ENCODE measurements at regions of chr6 and their contacts with region 1.

Region 1: GRCh38 chr6:53090576-53090975 is 25.4 kb downstream of the FBXO9 start:
- DNase-seq: no peak
- ATAC-seq: no peak
- H3K4me3 ChIP-seq: no peak overlapping the region
- H3K4me3 Mint-ChIP-seq: no peak overlapping the region
- H3K27ac ChIP-seq: no peak overlapping the region
- H3K27ac Mint-ChIP-seq: no peak overlapping the region
- H3K4me1 ChIP-seq: no peaks in the 10 kb centered on the region
- H3K4me1 Mint-ChIP-seq: no peaks in the 10 kb centered on the region
- H3K27me3 ChIP-seq: no peaks in the 10 kb centered on the region
- H3K27me3 Mint-ChIP-seq: no peaks in the 10 kb centered on the region
- CTCF ChIP-seq: no peak

Region 2: GRCh38 chr6:53026526-53026925 is 64.0 kb before region 1 on chr6:
- CTCF ChIA-PET with region 1: no interaction called
- POLR2A ChIA-PET with region 1: no interaction called
- intact Hi-C with region 1: loop called in 1 of 2 experiments (anchors 2 kb)
- DNase-seq: no peak
- ATAC-seq: no peak
- H3K4me3 ChIP-seq: no peak overlapping the region
- H3K4me3 Mint-ChIP-seq: no peak overlapping the region
- H3K27ac ChIP-seq: no peak overlapping the region
- H3K27ac Mint-ChIP-seq: no peak overlapping the region
- H3K4me1 ChIP-seq: no peaks in the 10 kb centered on the region
- H3K4me1 Mint-ChIP-seq: no peaks in the 10 kb centered on the region
- H3K27me3 ChIP-seq: no peaks in the 10 kb centered on the region
- H3K27me3 Mint-ChIP-seq: no peaks in the 10 kb centered on the region
- CTCF ChIP-seq: no peak

Measured in CD8-positive, alpha-beta T cell (primary cell).